Aorta (tissue), 5 donors: ENCODE measurements at regions of chr22 and their contacts with region 1.

Region 1: GRCh38 chr22:42662114-42663021 is 13.2 kb upstream of the CYB5R3 start:
- DNase-seq: peak; percentile 89 to 97
- ATAC-seq: peak; percentile 95
- H3K4me3 ChIP-seq: peak overlapping the region; percentile 37 to 42
- H3K27ac ChIP-seq: no peak overlapping the region
- H3K4me1 ChIP-seq: no peaks in the 10 kb centered on the region
- H3K27me3 ChIP-seq: no peaks in the 10 kb centered on the region

Region 2: GRCh38 chr22:42699976-42700352 is 37.6 kb after region 1 on chr22:
- intact Hi-C with region 1: loop called in 1 of 2 experiments (anchors 2 kb)
- DNase-seq: peak in 1 of 2 donors; percentile 20
- ATAC-seq: no peak
- H3K4me3 ChIP-seq: no peak overlapping the region
- H3K27ac ChIP-seq: no peak overlapping the region
- H3K4me1 ChIP-seq: no peaks in the 10 kb centered on the region
- H3K27me3 ChIP-seq: no peaks in the 10 kb centered on the region

Region 3: GRCh38 chr22:42717197-42717928 is 55.0 kb after region 1 on chr22:
- intact Hi-C with region 1: loop called (anchors 5 kb)
- DNase-seq: no peak
- ATAC-seq: no peak
- H3K4me3 ChIP-seq: no peak overlapping the region
- H3K27ac ChIP-seq: no peak overlapping the region
- H3K4me1 ChIP-seq: no peaks in the 10 kb centered on the region
- H3K27me3 ChIP-seq: no peaks in the 10 kb centered on the region

Region 4: GRCh38 chr22:42780070-42780540 is 117.7 kb after region 1 on chr22:
- intact Hi-C with region 1: loop called in 1 of 2 experiments (anchors 10 kb)
- DNase-seq: no peak
- ATAC-seq: peak; percentile 85
- H3K4me3 ChIP-seq: no peak overlapping the region
- H3K27ac ChIP-seq: no peak overlapping the region
- H3K4me1 ChIP-seq: no peaks in the 10 kb centered on the region
- H3K27me3 ChIP-seq: no peaks in the 10 kb centered on the region

Region 5: GRCh38 chr22:42805016-42805997 is 142.9 kb after region 1 on chr22:
- intact Hi-C with region 1: loop called in 1 of 2 experiments (anchors 10 kb)
- DNase-seq: no peak
- ATAC-seq: peak; percentile 61
- H3K4me3 ChIP-seq: no peak overlapping the region
- H3K27ac ChIP-seq: peak overlapping the region; percentile 62 to 92
- H3K4me1 ChIP-seq: peaks cover 0 to 2% of the 10 kb centered on the region in 2 donors
- H3K27me3 ChIP-seq: no peaks in the 10 kb centered on the region

Region 6: GRCh38 chr22:42820066-42820763 is 157.8 kb after region 1 on chr22:
- intact Hi-C with region 1: loop called in 1 of 2 experiments (anchors 2 kb)
- DNase-seq: no peak
- ATAC-seq: no peak
- H3K4me3 ChIP-seq: no peak overlapping the region
- H3K27ac ChIP-seq: no peak overlapping the region
- H3K4me1 ChIP-seq: no peaks in the 10 kb centered on the region
- H3K27me3 ChIP-seq: no peaks in the 10 kb centered on the region